Heart left ventricle (tissue), 16 donors: ENCODE measurements at regions of chr7 and their contacts with region 1.

Region 1: GRCh38 chr7:45923290-45923689 is 2.2 kb upstream of the IGFBP3 start:
- DNase-seq: peak; percentile 71 to 83 (median 76)
- ATAC-seq: peak in 3 of 4 donors; percentile 52 to 61 (median 59)
- H3K4me3 ChIP-seq: peak overlapping the region in 9 of 12 donors; percentile 13 to 72 (median 59)
- H3K27ac ChIP-seq: peak overlapping the region in 7 of 12 donors; percentile 14 to 75 (median 48)
- H3K4me1 ChIP-seq: peaks cover 0 to 37% (median 22%) of the 10 kb centered on the region in 12 donors
- H3K27me3 ChIP-seq: peaks cover 0 to 49% (median 0%) of the 10 kb centered on the region in 9 donors
- CTCF ChIP-seq: peak; percentile 80 to 98 (median 91)
- POLR2A ChIP-seq: no peak

Region 2: DNA sequence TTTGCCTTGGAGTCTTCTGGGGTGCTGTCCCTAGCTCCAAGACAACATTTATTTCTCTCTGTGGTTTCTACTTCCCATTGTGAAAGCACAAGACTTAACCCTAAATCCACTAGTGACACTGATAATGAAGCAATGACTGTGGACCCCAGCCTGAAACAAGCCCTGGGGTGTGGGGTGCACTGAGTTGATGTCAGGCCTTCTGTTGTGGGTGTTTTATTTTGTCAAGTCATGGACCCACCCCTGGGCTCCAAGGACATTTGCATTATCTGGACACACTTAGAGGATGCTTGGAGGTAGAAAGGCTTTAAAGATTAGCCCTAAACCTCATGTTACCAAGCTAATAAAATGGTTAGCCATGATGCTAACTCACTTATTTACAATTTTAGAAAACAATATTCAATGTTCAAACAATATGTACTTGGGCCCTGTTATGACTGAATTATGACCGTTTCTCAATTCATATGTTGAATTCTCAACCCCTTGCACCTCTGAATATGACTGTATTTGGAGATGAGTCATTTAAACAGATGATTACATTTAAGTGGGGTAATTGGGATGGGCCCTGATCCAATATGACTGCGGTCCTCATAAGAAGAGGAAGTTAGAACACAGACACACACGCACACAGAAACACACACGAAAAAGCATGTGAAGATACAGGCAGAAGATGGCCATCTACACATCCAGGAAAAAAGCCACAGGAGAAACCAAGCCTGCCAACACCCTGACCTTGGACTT is 135.0 kb after region 1 on chr7:
- intact Hi-C with region 1: loop called in 2 of 10 experiments (anchors 10 kb)
- DNase-seq: no peak
- ATAC-seq: no peak
- H3K4me3 ChIP-seq: no peak overlapping the region
- H3K27ac ChIP-seq: no peak overlapping the region
- H3K4me1 ChIP-seq: peaks cover 0 to 16% (median 10%) of the 10 kb centered on the region in 12 donors
- H3K27me3 ChIP-seq: no peaks in the 10 kb centered on the region
- CTCF ChIP-seq: no peak
- POLR2A ChIP-seq: no peak

Region 3: GRCh38 chr7:46352004-46352954 is 429.0 kb after region 1 on chr7:
- intact Hi-C with region 1: loop called (anchors 1 to 5 kb)
- DNase-seq: peak in 3 of 5 donors; percentile 20 to 45 (median 23)
- ATAC-seq: peak in 2 of 4 donors; percentile 58 to 74
- H3K4me3 ChIP-seq: no peak overlapping the region
- H3K27ac ChIP-seq: no peak overlapping the region
- H3K4me1 ChIP-seq: no peaks in the 10 kb centered on the region
- H3K27me3 ChIP-seq: peaks cover 0 to 3% (median 0%) of the 10 kb centered on the region in 9 donors
- CTCF ChIP-seq: peak; percentile 37 to 77 (median 68)
- POLR2A ChIP-seq: no peak

Region 4: GRCh38 chr7:46776790-46777189 is 853.5 kb after region 1 on chr7:
- intact Hi-C with region 1: loop called in 2 of 10 experiments (anchors 5 to 10 kb)
- DNase-seq: no peak
- ATAC-seq: no peak
- H3K4me3 ChIP-seq: no peak overlapping the region
- H3K27ac ChIP-seq: no peak overlapping the region
- H3K4me1 ChIP-seq: peaks cover 0 to 31% (median 15%) of the 10 kb centered on the region in 12 donors
- H3K27me3 ChIP-seq: no peaks in the 10 kb centered on the region
- CTCF ChIP-seq: peak in 11 of 12 donors; percentile 27 to 63 (median 52)
- POLR2A ChIP-seq: no peak

Region 5: DNA sequence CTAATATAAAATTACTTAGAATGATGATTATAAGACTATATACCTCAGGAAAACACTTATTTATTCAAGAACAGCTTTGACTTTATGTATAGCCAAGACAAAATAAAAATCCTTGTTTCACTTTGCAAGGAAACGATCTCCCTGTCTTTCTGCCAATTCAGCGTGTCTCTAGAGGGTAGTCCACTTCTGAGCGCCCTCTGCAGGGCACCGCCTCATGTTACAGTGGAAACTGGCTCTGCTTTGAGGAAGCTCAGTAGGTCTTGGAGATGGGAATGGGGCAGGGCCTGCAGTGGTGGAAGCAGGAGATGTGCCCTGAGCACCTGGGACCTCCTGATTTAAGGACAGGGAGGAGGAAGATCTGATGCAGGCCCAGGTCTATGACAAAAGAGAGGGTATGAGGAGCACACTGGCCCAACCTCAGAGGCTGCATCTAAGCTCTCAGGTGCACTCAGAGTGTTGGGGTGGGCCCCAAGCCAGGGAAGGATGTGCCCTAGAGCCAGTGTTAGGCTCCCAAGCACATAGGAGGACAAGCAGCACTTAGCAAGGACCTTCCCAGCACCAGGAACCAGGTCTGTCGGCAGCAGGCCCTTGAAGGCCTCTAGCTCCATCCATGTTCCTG is 1177.6 kb after region 1 on chr7:
- intact Hi-C with region 1: loop called in 1 of 10 experiments (anchors 5 kb)
- DNase-seq: peak in 3 of 5 donors; percentile 36 to 37 (median 36)
- ATAC-seq: peak in 3 of 4 donors; percentile 53 to 59 (median 57)
- H3K4me3 ChIP-seq: no peak overlapping the region
- H3K27ac ChIP-seq: no peak overlapping the region
- H3K4me1 ChIP-seq: peaks cover 0 to 6% (median 0%) of the 10 kb centered on the region in 12 donors
- H3K27me3 ChIP-seq: no peaks in the 10 kb centered on the region
- CTCF ChIP-seq: peak in 11 of 12 donors; percentile 31 to 59 (median 45)
- POLR2A ChIP-seq: no peak